ENCODE measurements at regions of chr9 and their contacts with region 1.

Region 1: DNA sequence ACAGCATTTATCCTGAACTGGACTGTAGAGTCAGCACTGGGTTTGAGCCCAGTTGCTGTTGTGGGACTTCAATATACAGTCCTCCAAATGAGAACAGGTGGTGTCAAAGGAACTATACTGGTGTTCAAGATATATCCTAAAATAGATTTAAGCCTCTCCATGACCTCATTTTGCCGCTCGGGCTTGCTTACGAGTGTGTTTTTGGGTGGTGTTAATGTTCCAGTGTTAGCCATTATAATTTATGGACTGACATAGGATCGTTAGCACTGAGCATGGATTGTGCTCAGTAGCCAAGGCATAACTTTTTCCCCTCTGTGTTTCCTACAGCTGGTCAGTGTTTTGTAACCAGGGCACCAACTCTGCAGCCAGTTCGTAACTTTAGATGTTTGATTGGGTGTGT is 306.6 kb downstream of the SPATA31D1 start:
- DNase-seq: peak; percentile 19 to 81
- ATAC-seq: peak; percentile 97 to 99 (median 98)
- H3K4me3 ChIP-seq: no peak overlapping the region
- H3K27ac ChIP-seq: peak overlapping the region; percentile 81
- H3K4me1 ChIP-seq: peaks cover 12% of the 10 kb centered on the region
- H3K27me3 ChIP-seq: no peaks in the 10 kb centered on the region
- CTCF ChIP-seq: no peak

Region 2: GRCh38 chr9:81578606-81579005 is 716.6 kb before region 1 on chr9:
- intact Hi-C with region 1: no loop called
- DNase-seq: no peak
- ATAC-seq: peak in 1 of 4 donors; percentile 15
- H3K4me3 ChIP-seq: no peak overlapping the region
- H3K27ac ChIP-seq: no peak overlapping the region
- H3K4me1 ChIP-seq: peaks cover 3% of the 10 kb centered on the region
- H3K27me3 ChIP-seq: no peaks in the 10 kb centered on the region
- CTCF ChIP-seq: no peak

Region 3: GRCh38 chr9:82247318-82247717 is 47.9 kb before region 1 on chr9:
- intact Hi-C with region 1: no loop called
- DNase-seq: peak in 1 of 2 donors; percentile 35
- ATAC-seq: no peak
- H3K4me3 ChIP-seq: no peak overlapping the region
- H3K27ac ChIP-seq: no peak overlapping the region
- H3K4me1 ChIP-seq: no peaks in the 10 kb centered on the region
- H3K27me3 ChIP-seq: no peaks in the 10 kb centered on the region
- CTCF ChIP-seq: no peak

Region 4: DNA sequence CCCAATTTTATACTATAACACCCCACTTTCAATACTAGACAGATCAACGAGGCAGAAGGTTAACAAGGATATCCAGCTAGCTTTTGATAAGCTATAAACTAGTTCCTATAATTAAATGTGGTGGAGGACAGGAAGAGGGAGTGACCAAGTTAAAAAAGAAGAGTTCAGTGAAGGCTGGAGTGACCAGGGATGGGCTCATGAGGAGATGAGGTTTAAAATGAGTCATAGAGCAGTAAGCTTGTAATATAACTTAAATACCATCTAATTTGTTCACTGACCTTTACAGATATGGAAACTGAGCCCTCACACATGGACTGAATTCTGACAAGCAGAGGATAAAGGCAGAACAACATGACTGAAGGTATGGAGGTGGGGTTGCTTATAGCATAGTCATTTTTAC is 22.1 kb before region 1 on chr9:
- intact Hi-C with region 1: no loop called
- DNase-seq: no peak
- ATAC-seq: no peak
- H3K4me3 ChIP-seq: no peak overlapping the region
- H3K27ac ChIP-seq: no peak overlapping the region
- H3K4me1 ChIP-seq: no peaks in the 10 kb centered on the region
- H3K27me3 ChIP-seq: no peaks in the 10 kb centered on the region
- CTCF ChIP-seq: no peak

Region 5: DNA sequence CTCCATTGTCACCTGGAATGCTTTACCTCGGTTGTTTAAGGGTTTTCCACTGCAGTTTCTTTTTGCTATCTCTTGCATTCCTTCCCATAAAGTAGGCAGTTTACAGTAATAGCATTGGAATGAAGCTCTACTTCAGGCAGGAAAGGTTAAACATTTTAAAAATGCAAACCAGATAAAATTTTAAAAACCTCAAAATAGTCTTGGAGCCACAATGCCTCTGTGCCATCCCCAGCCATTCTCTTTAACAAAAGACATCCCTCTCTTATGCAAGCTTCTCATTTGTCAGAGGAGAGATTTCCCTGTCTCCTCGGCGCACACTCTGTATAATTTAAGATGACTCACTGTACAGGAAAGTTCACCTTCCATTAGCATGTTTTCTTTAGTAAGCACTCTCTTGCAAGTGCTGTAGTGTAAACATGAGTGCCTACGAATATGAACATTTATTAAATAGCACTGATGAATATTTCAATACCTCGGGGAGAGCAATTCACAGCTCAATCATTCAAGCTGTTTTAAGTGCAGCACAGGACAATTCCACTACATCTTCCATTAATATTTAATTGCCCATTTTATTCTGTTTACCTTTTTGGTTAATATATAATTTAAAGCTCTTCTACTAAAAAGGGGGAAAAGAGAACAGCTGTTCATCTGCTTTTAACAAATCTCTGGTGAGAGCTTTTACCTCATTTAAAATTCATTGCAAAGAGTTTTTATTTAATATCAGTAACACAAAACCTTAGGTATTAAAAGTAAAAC is 37.0 kb after region 1 on chr9:
- intact Hi-C with region 1: loop called in 1 of 2 experiments (anchors 2 kb)
- DNase-seq: no peak
- ATAC-seq: peak; percentile 85 to 93 (median 88)
- H3K4me3 ChIP-seq: no peak overlapping the region
- H3K27ac ChIP-seq: peak overlapping the region; percentile 74
- H3K4me1 ChIP-seq: peaks cover 14% of the 10 kb centered on the region
- H3K27me3 ChIP-seq: no peaks in the 10 kb centered on the region
- CTCF ChIP-seq: no peak

Region 6: DNA sequence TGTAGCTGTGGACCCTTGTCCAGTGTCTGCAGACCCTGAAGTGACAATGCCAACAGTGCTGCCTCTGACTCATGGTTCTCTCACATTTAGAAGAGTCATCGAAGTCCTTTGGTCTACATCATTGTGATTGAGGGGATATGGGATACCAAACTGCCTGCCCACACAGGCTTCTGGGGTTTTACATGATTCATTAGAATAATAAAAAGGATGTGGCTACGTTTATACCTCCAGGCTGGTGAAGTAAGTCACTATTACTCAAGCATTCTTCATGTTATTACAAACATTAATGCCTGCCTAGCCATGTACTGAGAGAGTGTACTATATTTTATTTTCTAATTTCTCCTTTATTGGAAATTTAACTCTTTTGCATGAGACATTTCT is 59.1 kb after region 1 on chr9:
- intact Hi-C with region 1: no loop called
- DNase-seq: no peak
- ATAC-seq: no peak
- H3K4me3 ChIP-seq: no peak overlapping the region
- H3K27ac ChIP-seq: no peak overlapping the region
- H3K4me1 ChIP-seq: no peaks in the 10 kb centered on the region
- H3K27me3 ChIP-seq: no peaks in the 10 kb centered on the region
- CTCF ChIP-seq: no peak